ENCODE measurements at regions of chr10 and their contacts with region 1.

Region 1: DNA sequence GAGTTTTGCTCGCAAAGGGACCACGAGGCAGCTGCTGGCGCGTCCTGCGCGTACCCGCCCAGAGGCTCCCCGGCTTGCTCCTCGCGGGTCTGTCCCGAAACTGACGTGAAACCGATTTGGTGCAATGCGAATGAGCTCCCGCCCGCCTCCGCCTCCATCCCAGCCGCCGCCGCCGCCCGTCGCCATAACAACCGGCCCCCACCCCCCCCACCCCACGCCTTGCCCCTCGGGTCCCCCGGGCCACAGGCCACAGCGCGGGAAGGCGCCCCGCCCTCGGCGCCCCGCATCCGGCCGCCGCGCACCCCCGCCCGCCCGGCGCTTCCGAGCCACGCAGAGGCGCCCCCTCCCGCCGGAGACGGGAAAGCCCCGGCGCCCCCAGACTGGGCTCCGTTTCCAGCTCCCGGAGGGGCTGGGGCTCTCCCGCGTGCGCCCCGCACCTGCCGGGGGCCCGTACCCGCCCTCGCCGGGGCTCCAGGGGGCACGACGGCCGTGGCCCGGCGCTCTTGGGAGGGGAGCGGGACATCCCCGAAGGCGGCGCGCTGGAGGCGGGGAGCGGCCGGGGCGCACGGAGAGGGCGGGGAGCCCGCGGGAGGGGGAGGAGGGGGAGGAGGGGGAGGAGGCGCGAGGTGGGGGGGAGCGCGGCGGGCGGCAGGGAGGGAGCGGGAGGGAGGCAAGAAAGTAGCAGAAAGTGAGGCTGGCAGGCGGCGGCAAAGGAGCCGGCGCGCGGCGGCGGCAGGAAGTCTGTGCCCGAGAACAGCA is at the start of gene CAMK1D:
- DNase-seq: peak; percentile 33 to 90
- H3K4me3 ChIP-seq: peak within 1 kb of the TSS; percentile 88 to 100
- H3K27ac ChIP-seq: peak within 1 kb of the TSS; percentile 94 to 95
- H3K4me1 ChIP-seq: peaks cover 0 to 12% of the 10 kb centered on the region in 2 donors
- H3K27me3 ChIP-seq: no peaks in the 10 kb centered on the region
- CTCF ChIP-seq: peak in 2 of 3 experiments; percentile 44 to 50
- total RNA-seq, gene CAMK1D: 4.2 TPM

Region 2: DNA sequence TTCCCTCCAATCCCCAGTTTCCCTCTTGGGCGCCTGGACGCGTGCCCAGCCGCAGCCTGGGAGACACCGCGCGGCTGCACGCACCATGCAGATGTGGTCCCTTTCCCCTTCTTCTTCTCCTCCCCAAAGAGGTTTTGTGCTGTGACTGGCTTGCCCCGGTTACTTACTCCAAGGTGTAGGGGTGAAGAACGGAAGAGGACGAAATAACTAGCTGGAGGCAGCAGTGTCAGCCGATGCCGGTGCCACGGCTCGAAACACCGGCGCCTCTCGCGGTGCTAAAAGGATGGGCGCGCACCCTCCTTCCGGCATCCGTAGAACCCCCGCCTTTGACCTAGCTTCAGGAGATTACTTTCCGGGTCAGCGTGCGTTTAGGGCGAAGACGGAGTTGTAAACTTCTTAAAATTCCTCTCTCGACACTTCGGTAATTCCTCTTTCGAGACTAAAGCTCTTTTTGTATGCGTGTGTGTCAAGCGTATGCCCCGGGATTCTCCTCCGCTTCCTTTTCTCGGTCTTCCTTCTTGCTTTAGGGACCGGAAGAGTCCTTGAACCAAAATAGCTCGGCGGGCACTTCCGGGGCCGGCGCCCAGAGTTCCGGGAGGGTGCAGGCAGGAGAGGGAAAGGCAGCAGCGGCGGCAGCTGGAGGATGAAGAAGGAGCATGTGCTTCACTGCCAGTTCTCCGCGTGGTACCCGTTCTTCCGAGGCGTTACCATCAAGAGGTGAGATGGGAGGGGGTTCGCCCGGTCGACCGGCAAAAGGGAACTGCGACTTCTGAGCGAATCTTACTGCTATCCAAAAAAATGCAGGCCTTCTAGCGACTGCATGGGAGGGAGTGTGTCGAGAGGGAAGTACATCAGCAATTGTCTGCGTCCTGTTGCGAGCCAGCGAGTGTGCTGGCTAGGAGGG is 153.2 kb before region 1 on chr10 and contains the starts of genes CDC123 and NUDT5:
- intact Hi-C with region 1: loop called (anchors 5 kb)
- DNase-seq: peak; percentile 36 to 91
- H3K4me3 ChIP-seq: peak within 1 kb of the TSS; percentile 71 to 89
- H3K27ac ChIP-seq: peak within 1 kb of the TSS; percentile 88 to 92
- H3K4me1 ChIP-seq: peaks cover 9 to 27% of the 10 kb centered on the region in 2 donors
- H3K27me3 ChIP-seq: no peaks in the 10 kb centered on the region
- CTCF ChIP-seq: peak in 1 of 3 experiments; percentile 7
- total RNA-seq, gene CDC123: 33.2 TPM
- total RNA-seq, gene NUDT5: 10.2 TPM

Region 3: DNA sequence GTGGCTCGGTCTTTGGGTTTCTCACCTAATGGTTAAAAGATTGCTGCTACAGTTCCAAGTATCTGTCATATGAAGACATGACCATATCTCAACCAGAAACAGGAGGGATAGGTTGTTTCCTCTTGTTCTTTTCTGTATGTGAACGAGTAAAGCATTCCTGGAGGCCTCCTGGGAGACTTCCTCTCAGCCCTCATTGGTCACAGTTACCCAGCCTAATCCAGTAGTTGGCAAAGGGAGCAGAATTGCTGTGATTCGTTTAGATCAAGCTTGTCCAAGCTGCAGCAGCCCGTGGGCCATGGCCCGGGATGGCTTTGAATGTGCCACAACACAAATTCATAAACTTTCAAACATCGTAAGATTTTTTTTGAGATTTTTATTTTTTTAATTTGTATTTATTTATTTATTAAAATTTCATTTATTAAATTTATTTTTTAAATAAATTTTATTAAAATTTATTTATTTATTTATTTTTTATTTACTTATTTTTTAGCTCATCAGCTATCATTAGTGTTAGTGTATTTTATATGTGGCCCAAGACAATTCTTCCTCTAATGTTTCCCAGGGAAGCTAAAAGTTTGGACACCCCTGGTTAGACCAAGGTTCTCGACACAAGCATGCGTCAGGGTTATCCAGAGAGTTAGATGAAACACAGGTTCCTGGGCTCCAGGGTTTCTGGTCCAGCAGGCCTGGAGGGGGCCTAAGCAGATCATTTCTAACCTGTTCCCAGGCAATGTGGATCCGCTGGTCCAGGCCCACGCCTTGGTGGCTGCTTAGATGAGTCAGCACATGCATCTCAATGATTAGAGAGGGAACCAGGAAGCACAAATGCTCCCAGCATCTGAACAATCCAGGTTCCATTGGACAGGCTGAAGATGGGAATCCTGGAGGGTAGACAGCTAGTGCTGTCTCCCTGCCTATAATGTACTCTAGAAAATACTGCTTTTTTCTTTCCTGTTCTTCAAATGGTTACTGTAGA is 127.4 kb before region 1 on chr10:
- intact Hi-C with region 1: loop called (anchors 2 kb)
- DNase-seq: no peak
- H3K4me3 ChIP-seq: no peak overlapping the region
- H3K27ac ChIP-seq: peak overlapping the region; percentile 65 to 72
- H3K4me1 ChIP-seq: peaks cover 5 to 35% of the 10 kb centered on the region in 2 donors
- H3K27me3 ChIP-seq: no peaks in the 10 kb centered on the region
- CTCF ChIP-seq: no peak

Region 4: DNA sequence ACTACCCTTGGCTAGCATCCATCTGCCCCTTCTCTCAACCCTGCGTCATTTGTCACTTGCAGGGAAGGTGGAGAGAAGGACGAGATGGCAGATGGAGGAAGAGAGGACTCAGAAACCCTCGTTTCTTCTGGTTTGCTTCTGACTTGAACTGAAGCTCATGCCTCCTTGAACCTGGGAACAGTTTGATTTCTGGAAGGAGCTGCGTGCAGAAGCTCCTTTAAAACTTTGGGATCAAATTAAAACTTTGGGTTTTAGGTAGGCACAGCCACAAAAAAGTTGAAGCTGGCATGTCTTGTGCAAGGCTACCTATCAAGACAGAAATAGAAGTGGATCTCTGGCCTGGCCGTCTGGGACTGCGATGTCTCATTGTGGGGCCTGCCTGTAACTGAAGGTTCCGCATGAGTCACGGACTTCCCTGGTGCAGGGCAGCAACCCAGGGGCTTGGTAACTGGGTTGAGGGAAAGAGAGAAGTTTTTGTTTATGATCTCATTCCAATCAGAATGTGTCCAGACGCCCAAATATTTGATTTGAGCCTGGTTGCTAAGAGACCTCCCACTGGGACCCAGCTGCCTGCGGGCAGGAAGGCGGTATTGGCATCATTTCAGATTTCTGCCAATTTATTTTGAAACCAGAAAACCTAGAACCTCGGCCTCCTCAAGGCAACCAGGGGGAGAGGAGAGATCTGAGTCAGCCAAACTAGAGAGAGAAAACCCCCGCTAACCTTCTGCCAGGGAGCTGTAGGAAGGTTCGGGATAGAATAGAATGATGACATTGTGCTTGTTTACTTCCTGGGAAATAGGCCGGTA is 15.5 kb before region 1 on chr10:
- intact Hi-C with region 1: loop called (anchors 1 kb)
- DNase-seq: peak; percentile 80 to 96
- H3K4me3 ChIP-seq: peak overlapping the region in 1 of 2 donors; percentile 30
- H3K27ac ChIP-seq: peak overlapping the region; percentile 85 to 86
- H3K4me1 ChIP-seq: peaks cover 0 to 18% of the 10 kb centered on the region in 2 donors
- H3K27me3 ChIP-seq: no peaks in the 10 kb centered on the region
- CTCF ChIP-seq: no peak

Region 5: DNA sequence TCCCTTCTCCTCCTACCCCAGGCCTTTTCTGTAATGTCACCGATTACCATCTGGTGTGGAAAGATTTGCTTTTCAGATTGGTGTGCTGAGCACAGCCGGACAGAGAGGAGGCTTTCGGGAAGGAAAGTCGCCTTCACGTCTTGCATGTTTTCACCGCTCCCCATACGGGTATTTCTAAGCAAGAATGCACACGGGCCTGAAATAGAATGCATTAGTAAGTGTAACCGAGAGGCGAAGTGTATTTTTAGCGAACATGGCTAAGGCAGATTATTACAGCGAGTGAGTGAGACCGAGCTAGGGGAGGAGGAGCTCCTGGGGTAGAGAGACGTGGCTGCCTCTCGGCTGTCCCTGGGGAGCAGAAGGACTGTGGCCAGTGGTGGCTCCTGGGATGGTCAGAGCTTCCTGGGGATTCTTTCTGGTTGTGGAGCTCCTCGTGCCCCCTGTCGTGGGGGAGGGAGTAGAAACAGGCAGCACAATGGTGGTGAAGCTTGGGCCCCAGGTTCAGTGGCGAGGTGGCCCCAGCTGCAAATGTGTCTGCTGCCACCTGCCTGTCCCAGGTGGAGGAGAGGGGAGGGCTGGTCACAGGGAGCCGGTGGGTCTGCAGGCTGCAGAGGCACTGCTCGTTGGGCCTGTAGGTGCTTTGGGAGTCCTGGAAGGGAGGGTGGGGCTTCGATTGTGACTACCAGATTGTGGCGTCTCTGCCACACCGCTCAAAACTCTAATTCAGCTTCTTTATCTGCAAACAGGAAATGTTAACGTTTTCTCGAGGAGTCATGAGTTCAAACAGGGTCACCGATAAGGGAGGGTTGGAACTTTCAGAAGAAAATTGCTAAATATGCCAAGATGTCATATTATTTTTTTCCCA is 136.1 kb after region 1 on chr10:
- intact Hi-C with region 1: loop called (anchors 1 kb)
- DNase-seq: peak in 1 of 2 donors; percentile 82
- H3K4me3 ChIP-seq: peak overlapping the region; percentile 18 to 57
- H3K27ac ChIP-seq: peak overlapping the region; percentile 73 to 90
- H3K4me1 ChIP-seq: peaks cover 3 to 16% of the 10 kb centered on the region in 2 donors
- H3K27me3 ChIP-seq: no peaks in the 10 kb centered on the region
- CTCF ChIP-seq: peak in 2 of 3 experiments; percentile 16 to 20

Region 6: DNA sequence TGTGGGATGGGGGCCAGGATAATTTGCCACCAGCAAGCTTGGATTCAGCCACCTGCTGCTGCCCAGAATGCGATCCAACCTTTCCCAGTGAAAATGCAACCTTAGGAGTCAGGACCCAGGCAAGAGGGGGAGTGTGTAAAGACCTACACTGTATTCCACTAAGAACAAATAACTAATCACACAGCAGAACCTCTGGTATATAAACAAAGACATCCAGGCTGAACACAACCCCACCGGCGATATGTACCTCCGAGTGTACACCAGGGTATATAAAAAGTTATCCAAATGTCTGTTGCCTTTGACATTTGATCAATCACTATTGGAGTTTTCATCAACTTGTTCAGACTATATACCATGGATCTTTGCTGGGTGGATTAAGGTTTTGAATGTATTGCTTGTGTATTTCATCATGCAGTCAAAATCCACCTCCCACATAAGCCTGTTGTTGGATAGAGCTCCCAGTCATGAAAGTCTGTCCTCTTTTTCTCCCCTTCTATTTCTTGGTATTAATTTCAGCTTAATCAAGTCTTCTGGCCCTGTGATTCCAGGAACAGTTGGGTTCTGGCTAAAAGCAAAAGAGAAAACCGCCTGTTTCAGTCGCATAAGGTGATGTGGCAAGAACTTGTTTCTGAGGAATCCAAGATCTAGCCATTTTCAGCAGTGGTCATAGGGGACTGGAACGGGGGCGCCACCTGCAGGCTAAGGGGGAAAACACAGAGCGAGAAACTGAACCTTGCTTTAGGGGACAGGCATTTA is 361.7 kb after region 1 on chr10:
- intact Hi-C with region 1: loop called (anchors 5 kb)
- DNase-seq: peak in 1 of 2 donors; percentile 88
- H3K4me3 ChIP-seq: no peak overlapping the region
- H3K27ac ChIP-seq: peak overlapping the region; percentile 82
- H3K4me1 ChIP-seq: peaks cover 15 to 39% of the 10 kb centered on the region in 2 donors
- H3K27me3 ChIP-seq: no peaks in the 10 kb centered on the region
- CTCF ChIP-seq: peak; percentile 87 to 94 (median 90)

Measured in ascending aorta (tissue), 2 donors.